CD8-positive, alpha-beta memory T cell (primary cell): ENCODE measurements at regions of chr17 and their contacts with region 1.

Region 1: DNA sequence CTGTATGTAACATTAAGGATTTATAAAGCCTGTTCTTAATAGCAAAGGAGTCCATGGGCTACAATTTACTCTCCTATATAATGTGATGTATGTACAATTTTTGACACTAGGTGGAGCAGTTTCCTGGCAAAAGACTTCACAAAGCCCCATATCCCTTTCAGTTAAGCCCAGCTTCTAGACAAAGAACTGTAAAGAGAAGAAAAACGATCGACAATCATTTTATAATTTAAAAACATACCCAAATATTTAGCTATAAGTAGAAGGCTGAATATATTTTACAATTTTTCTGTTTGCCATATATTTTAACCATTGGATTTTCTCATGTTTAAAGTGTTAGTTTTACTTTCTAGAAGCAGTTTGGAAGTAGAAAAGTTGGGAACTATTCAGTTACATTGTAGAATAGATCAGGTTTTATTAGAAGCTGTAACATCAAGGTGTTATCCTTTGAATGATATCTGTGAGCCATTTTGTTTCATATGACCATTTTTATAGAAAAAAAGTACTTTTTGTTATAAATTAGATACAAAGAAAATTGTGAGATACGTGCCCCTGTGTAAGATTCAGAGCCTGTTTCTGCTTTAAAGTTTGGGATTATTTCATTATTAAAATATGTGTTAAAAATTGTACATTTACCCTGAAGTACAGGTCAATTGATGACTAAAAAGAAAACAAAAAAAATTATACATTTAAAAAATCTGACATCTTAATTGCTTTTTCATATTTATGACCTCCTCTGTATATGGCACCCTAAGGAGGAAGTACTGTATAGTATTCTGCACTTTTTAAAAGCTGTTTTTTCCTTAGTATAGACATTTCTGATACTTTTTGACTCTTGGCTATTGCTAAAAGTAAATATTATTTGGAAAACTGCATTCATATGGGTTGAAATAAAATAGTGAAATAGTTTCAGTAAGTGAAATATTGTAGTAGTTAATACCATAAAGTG is 46.3 kb downstream of the VMP1 start:
- DNase-seq: peak in 3 of 5 donors; percentile 5 to 61 (median 61)
- H3K4me3 ChIP-seq: no peak overlapping the region
- H3K4me3 Mint-ChIP-seq: peak overlapping the region; percentile 0 to 70 (median 40)
- H3K27ac ChIP-seq: peak overlapping the region; percentile 48
- H3K27ac Mint-ChIP-seq: peak overlapping the region in 5 of 8 donors; percentile 0 to 85 (median 55)
- H3K4me1 ChIP-seq: peaks cover 8% of the 10 kb centered on the region
- H3K4me1 Mint-ChIP-seq: peaks cover 16 to 29% (median 26%) of the 10 kb centered on the region in 3 donors
- H3K27me3 ChIP-seq: no peaks in the 10 kb centered on the region
- H3K27me3 Mint-ChIP-seq: no peaks in the 10 kb centered on the region

Region 2: DNA sequence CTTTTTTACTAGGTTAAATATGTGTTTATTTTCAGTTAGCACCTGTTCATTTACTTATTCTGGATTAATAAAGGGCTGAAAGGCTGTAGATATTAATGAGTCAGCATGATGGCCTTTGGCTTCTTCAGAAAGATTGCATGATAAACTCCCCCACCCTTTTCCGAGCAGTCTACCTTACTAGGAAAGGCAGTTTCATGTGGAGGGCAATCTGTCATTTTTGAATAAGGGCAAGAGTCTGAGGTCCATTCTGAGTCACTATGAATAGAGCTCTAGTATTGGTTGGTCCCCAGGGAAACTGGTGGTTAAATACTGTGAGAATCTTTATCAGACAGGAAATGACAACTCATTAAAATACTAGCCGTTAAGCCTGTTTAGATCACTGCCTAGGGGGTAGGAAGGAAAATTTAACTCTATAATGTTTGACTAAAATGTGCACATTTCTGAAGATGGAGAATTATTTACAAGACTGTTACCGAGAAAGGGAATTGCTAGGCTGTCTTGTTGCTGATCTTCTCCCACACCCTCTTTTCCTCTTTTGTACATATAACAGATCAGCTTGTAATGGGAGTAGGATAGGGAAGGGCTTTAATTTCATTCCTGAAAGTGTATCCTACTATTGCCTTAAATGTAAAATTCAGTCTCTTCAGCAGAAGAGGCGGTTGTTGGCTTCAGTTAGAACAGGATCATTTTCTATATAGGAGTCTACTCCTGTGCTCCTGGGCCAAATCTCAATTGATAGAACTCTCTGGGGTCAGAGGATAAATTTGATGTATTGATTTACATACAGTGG is 75.6 kb after region 1 on chr17:
- CTCF ChIA-PET with region 1: interaction called, 18 read pairs
- POLR2A ChIA-PET with region 1: no interaction called
- DNase-seq: peak in 3 of 5 donors; percentile 18 to 54 (median 53)
- H3K4me3 ChIP-seq: peak overlapping the region; percentile 50
- H3K4me3 Mint-ChIP-seq: peak overlapping the region; percentile 57 to 77 (median 64)
- H3K27ac ChIP-seq: peak overlapping the region; percentile 85
- H3K27ac Mint-ChIP-seq: peak overlapping the region; percentile 84 to 98 (median 90)
- H3K4me1 ChIP-seq: peaks cover 55% of the 10 kb centered on the region
- H3K4me1 Mint-ChIP-seq: peaks cover 52 to 81% (median 77%) of the 10 kb centered on the region in 3 donors
- H3K27me3 ChIP-seq: no peaks in the 10 kb centered on the region
- H3K27me3 Mint-ChIP-seq: no peaks in the 10 kb centered on the region

Region 3: DNA sequence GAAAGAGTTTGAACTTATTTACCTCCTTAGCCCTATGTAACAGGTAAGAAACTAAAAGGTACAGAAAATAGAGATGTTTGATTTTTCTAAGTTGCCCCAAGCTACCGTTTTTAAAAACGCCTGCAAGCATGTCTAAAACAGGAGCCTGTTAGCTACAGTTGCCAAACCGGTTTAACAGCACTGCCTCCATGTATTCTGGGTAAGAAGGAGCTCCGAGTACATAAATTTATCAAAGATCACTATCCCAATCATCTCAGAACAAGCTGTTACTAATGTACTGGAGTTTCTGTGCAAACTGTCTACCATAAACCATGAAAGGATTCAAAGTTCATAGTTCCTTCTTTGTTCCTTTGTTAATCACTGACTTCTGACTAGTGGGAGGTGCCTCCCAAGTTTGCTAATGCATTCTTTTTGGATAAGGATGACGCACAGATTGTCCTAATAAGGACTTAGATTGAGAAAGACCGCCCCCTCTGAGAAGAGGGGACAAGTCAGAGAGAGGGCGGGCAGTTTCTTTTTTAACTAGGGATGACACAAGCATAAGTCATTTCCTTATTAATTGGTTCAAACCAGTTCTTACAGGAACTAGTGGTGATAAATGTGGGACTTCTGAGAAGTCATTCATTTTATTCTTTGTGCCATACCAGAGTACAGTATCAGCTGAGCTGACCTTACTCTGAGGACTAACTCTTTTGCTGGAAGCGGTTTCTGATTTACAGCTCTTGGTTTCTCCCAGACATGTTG is 83.7 kb after region 1 on chr17:
- CTCF ChIA-PET with region 1: interaction called, 64 read pairs
- POLR2A ChIA-PET with region 1: interaction called, 8 read pairs
- DNase-seq: peak; percentile 46 to 86 (median 66)
- H3K4me3 ChIP-seq: peak overlapping the region; percentile 85
- H3K4me3 Mint-ChIP-seq: peak overlapping the region; percentile 92 to 99 (median 94)
- H3K27ac ChIP-seq: peak overlapping the region; percentile 95
- H3K27ac Mint-ChIP-seq: peak overlapping the region; percentile 93 to 100 (median 96)
- H3K4me1 ChIP-seq: peaks cover 9% of the 10 kb centered on the region
- H3K4me1 Mint-ChIP-seq: peaks cover 47 to 63% (median 61%) of the 10 kb centered on the region in 3 donors
- H3K27me3 ChIP-seq: no peaks in the 10 kb centered on the region
- H3K27me3 Mint-ChIP-seq: no peaks in the 10 kb centered on the region